OCI-LY7 (cell line): ENCODE measurements at regions of chr1 and their contacts with region 1.

Region 1: GRCh38 chr1:42999308-42999707 is 40.6 kb upstream of the SLC2A1 start:
- DNase-seq: no peak
- H3K4me3 ChIP-seq: no peak overlapping the region
- H3K27ac ChIP-seq: no peak overlapping the region
- H3K4me1 ChIP-seq: no peaks in the 10 kb centered on the region
- CTCF ChIP-seq: no peak

Region 2: DNA sequence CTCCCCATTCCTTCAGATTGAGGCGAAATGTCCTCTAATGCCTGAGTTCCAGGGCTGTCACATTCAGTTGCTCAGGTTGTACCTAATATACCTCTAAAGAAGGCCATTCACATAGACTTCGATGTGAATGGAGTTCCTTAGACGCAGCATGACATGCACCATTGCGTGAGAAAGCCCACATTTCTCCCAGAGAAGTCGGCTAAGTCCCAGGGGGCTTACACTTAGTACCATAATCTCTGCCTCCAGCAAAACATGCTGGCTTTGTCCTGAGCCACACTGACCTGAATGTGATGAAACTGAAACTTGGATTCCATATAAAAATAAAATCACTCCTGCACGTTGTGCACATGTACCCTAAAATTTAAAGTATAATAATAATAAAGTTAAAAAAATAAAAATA is 17.4 kb before region 1 on chr1:
- CTCF ChIA-PET with region 1: no interaction called
- POLR2A ChIA-PET with region 1: no interaction called
- intact Hi-C with region 1: loop called (anchors 1 kb)
- DNase-seq: no peak
- H3K4me3 ChIP-seq: no peak overlapping the region
- H3K27ac ChIP-seq: no peak overlapping the region
- H3K4me1 ChIP-seq: peaks cover 20% of the 10 kb centered on the region
- CTCF ChIP-seq: no peak

Region 3: GRCh38 chr1:43171876-43172526 is 172.7 kb after region 1 on chr1 and contains the starts of genes CFAP57 and EBNA1BP2:
- CTCF ChIA-PET with region 1: no interaction called
- POLR2A ChIA-PET with region 1: no interaction called
- intact Hi-C with region 1: no loop called
- DNase-seq: peak; percentile 96
- H3K4me3 ChIP-seq: peak within 1 kb of the TSS; percentile 99
- H3K27ac ChIP-seq: no peak within 1 kb of the TSS
- H3K4me1 ChIP-seq: peaks cover 18% of the 10 kb centered on the region
- CTCF ChIP-seq: no peak
- total RNA-seq, gene CFAP57: 0.05 TPM in 1 of 2 replicates, not detected in the other
- total RNA-seq, gene EBNA1BP2: 65.4 and 105 TPM in 2 replicates